Sigmoid colon (tissue), 7 donors: ENCODE measurements at regions of chr1 and their contacts with region 1.

Region 1: GRCh38 chr1:193183019-193183627 is 3.3 kb downstream of the B3GALT2 start:
- DNase-seq: no peak
- H3K4me3 ChIP-seq: peak overlapping the region in 3 of 4 donors; percentile 31 to 45 (median 44)
- H3K27ac ChIP-seq: peak overlapping the region in 2 of 4 donors; percentile 48 to 73
- H3K4me1 ChIP-seq: peaks cover 0 to 93% (median 48%) of the 10 kb centered on the region in 4 donors
- H3K27me3 ChIP-seq: no peaks in the 10 kb centered on the region
- CTCF ChIP-seq: peak in 3 of 4 experiments; percentile 59 to 73 (median 61)
- EP300 ChIP-seq: no peak
- POLR2A ChIP-seq: no peak

Region 2: GRCh38 chr1:193342811-193343210 is 159.7 kb after region 1 on chr1:
- intact Hi-C with region 1: loop called (anchors 5 kb)
- DNase-seq: no peak
- H3K4me3 ChIP-seq: no peak overlapping the region
- H3K27ac ChIP-seq: peak overlapping the region in 2 of 4 donors; percentile 42 to 43
- H3K4me1 ChIP-seq: peaks cover 0 to 10% (median 3%) of the 10 kb centered on the region in 4 donors
- H3K27me3 ChIP-seq: no peaks in the 10 kb centered on the region
- CTCF ChIP-seq: no peak
- EP300 ChIP-seq: no peak
- POLR2A ChIP-seq: no peak

Region 3: GRCh38 chr1:193787061-193787460 is 603.9 kb after region 1 on chr1:
- intact Hi-C with region 1: loop called (anchors 10 kb)
- DNase-seq: no peak
- H3K4me3 ChIP-seq: no peak overlapping the region
- H3K27ac ChIP-seq: no peak overlapping the region
- H3K4me1 ChIP-seq: peaks cover 0 to 24% (median 0%) of the 10 kb centered on the region in 4 donors
- H3K27me3 ChIP-seq: no peaks in the 10 kb centered on the region
- CTCF ChIP-seq: no peak
- EP300 ChIP-seq: no peak
- POLR2A ChIP-seq: no peak

Region 4: GRCh38 chr1:194078765-194079164 is 895.6 kb after region 1 on chr1:
- intact Hi-C with region 1: loop called (anchors 10 kb)
- DNase-seq: no peak
- H3K4me3 ChIP-seq: no peak overlapping the region
- H3K27ac ChIP-seq: no peak overlapping the region
- H3K4me1 ChIP-seq: peaks cover 0 to 24% (median 19%) of the 10 kb centered on the region in 4 donors
- H3K27me3 ChIP-seq: no peaks in the 10 kb centered on the region
- CTCF ChIP-seq: no peak
- EP300 ChIP-seq: no peak
- POLR2A ChIP-seq: no peak

Region 5: DNA sequence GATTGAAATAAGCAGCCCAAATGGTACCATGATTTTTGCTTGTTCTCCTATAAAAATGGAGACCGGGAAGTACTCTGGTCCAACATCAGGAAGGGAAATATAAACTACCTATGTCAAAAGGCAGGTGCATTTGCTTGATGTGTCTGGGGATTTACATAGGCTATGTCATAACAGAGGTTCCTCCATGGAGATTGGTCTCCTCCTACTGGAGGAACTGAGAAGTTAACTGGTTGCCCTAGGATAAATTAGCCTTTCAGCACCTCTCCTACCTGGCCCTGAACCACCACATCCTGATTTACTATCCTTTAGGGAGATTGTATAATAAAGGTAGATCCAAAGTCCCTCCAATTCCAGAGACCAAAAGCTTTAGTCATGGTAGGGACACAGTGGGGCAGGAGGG is 1112.6 kb after region 1 on chr1:
- intact Hi-C with region 1: loop called (anchors 10 kb)
- DNase-seq: no peak
- H3K4me3 ChIP-seq: no peak overlapping the region
- H3K27ac ChIP-seq: no peak overlapping the region
- H3K4me1 ChIP-seq: no peaks in the 10 kb centered on the region
- H3K27me3 ChIP-seq: no peaks in the 10 kb centered on the region
- CTCF ChIP-seq: peak; percentile 27 to 66 (median 46)
- EP300 ChIP-seq: no peak
- POLR2A ChIP-seq: no peak